CD4-positive, alpha-beta memory T cell (primary cell): ENCODE measurements at regions of chr19 and their contacts with region 1.

Region 1: GRCh38 chr19:11587302-11587974 is 9.8 kb upstream of the ZNF627 start:
- DNase-seq: peak; percentile 63 to 75 (median 70)
- H3K4me3 ChIP-seq: no peak overlapping the region
- H3K4me3 Mint-ChIP-seq: no peak overlapping the region
- H3K27ac ChIP-seq: no peak overlapping the region
- H3K27ac Mint-ChIP-seq: peak overlapping the region in 3 of 7 donors; percentile 35 to 86 (median 82)
- H3K4me1 ChIP-seq: peaks cover 3% of the 10 kb centered on the region
- H3K4me1 Mint-ChIP-seq: peaks cover 0 to 10% (median 1%) of the 10 kb centered on the region in 4 donors
- H3K27me3 ChIP-seq: no peaks in the 10 kb centered on the region
- H3K27me3 Mint-ChIP-seq: peaks cover 0 to 2% of the 10 kb centered on the region in 2 donors

Region 2: DNA sequence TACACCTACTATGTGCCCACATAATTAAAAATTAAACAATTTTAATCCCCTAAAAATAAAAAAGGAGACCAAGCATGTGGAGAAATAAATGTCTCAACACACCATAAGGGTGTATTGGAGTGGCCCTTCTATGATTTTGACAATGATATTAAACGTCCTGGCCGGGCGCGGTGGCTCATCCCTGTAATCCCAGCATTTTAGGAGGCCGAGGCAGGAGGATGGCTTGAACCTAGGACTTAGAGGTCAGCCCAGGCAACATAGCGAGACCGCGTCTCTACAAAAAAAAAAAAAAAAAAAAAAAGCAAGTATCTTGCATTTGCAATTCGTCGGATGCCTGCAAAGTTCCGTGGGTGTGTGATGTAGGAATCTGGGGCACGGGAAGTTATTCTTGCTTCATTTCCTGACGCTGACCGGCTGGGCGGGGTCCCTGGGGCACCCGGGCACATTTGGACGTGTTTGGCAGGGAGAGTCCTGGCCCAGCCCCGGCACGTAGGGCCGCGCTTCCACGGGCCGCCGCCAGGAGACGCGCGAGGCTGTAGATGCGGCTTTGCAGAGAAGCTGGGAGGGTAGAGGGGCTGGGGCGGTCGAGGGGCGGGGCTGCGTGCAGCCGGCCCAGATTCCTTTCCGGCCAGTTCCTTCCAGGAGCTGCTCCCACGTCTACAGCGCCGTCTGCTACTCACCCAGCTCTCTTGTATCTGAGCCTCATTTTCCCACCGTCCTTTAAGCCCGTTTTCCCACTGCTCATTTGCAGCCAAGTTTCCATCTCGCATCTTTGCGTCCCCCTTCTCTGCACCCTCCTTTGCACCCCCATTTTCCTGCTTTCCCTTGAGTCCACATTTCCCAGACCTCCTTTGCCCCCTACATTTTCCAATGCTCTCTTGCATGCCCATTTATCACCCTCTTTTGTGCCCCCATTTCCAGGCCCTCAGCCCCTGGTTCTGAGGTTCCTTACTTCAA is 293.7 kb before region 1 on chr19:
- CTCF ChIA-PET with region 1: interaction called, 4 read pairs
- POLR2A ChIA-PET with region 1: no interaction called
- intact Hi-C with region 1: loop called (anchors 1 kb)
- DNase-seq: peak; percentile 64 to 75 (median 71)
- H3K4me3 ChIP-seq: no peak overlapping the region
- H3K4me3 Mint-ChIP-seq: peak overlapping the region in 3 of 8 donors; percentile 20 to 71 (median 48)
- H3K27ac ChIP-seq: no peak overlapping the region
- H3K27ac Mint-ChIP-seq: peak overlapping the region in 2 of 7 donors; percentile 41 to 46
- H3K4me1 ChIP-seq: peaks cover 8% of the 10 kb centered on the region
- H3K4me1 Mint-ChIP-seq: peaks cover 4 to 8% (median 7%) of the 10 kb centered on the region in 4 donors
- H3K27me3 ChIP-seq: no peaks in the 10 kb centered on the region
- H3K27me3 Mint-ChIP-seq: peaks cover 12 to 16% of the 10 kb centered on the region in 2 donors

Region 3: GRCh38 chr19:11496391-11497163 is 90.9 kb before region 1 on chr19:
- CTCF ChIA-PET with region 1: no interaction called
- POLR2A ChIA-PET with region 1: no interaction called
- intact Hi-C with region 1: loop called (anchors 1 kb)
- DNase-seq: peak; percentile 43 to 57 (median 52)
- H3K4me3 ChIP-seq: no peak overlapping the region
- H3K4me3 Mint-ChIP-seq: no peak overlapping the region
- H3K27ac ChIP-seq: no peak overlapping the region
- H3K27ac Mint-ChIP-seq: peak overlapping the region in 1 of 7 donors; percentile 30
- H3K4me1 ChIP-seq: no peaks in the 10 kb centered on the region
- H3K4me1 Mint-ChIP-seq: peaks cover 4 to 10% (median 6%) of the 10 kb centered on the region in 4 donors
- H3K27me3 ChIP-seq: no peaks in the 10 kb centered on the region
- H3K27me3 Mint-ChIP-seq: no peaks in the 10 kb centered on the region

Region 4: GRCh38 chr19:11535792-11536595 is 51.4 kb before region 1 on chr19:
- CTCF ChIA-PET with region 1: interaction called, 38 read pairs
- POLR2A ChIA-PET with region 1: no interaction called
- intact Hi-C with region 1: loop called (anchors 1 kb)
- DNase-seq: peak; percentile 74 to 82 (median 78)
- H3K4me3 ChIP-seq: peak overlapping the region; percentile 27 to 29
- H3K4me3 Mint-ChIP-seq: peak overlapping the region; percentile 62 to 87 (median 76)
- H3K27ac ChIP-seq: peak overlapping the region; percentile 21
- H3K27ac Mint-ChIP-seq: peak overlapping the region; percentile 20 to 92 (median 83)
- H3K4me1 ChIP-seq: peaks cover 15% of the 10 kb centered on the region
- H3K4me1 Mint-ChIP-seq: peaks cover 7 to 14% (median 9%) of the 10 kb centered on the region in 4 donors
- H3K27me3 ChIP-seq: peaks cover 7% of the 10 kb centered on the region
- H3K27me3 Mint-ChIP-seq: peaks cover 4 to 12% of the 10 kb centered on the region in 2 donors